B cell (primary cell): ENCODE measurements at regions of chr21 and their contacts with region 1.

Region 1: GRCh38 chr21:43866260-43866629 is 1.2 kb downstream of the AGPAT3 start:
- DNase-seq: peak; percentile 51
- ATAC-seq: peak; percentile 16
- H3K4me3 ChIP-seq: peak overlapping the region; percentile 32 to 78 (median 65)
- H3K4me3 Mint-ChIP-seq: peak overlapping the region; percentile 78
- H3K27ac ChIP-seq: peak overlapping the region; percentile 11 to 64
- H3K27ac Mint-ChIP-seq: peak overlapping the region; percentile 72
- H3K4me1 ChIP-seq: peaks cover 13 to 33% of the 10 kb centered on the region in 2 donors
- H3K4me1 Mint-ChIP-seq: peaks cover 41% of the 10 kb centered on the region
- H3K27me3 ChIP-seq: no peaks in the 10 kb centered on the region
- H3K27me3 Mint-ChIP-seq: no peaks in the 10 kb centered on the region
- CTCF ChIP-seq: no peak

Region 2: GRCh38 chr21:43805275-43805800 is 60.9 kb before region 1 on chr21:
- CTCF ChIA-PET with region 1: no interaction called
- POLR2A ChIA-PET with region 1: no interaction called
- intact Hi-C with region 1: loop called (anchors 10 kb)
- DNase-seq: peak; percentile 95
- ATAC-seq: peak; percentile 98
- H3K4me3 ChIP-seq: peak overlapping the region in 1 of 5 experiments; percentile 16
- H3K4me3 Mint-ChIP-seq: peak overlapping the region; percentile 77
- H3K27ac ChIP-seq: peak overlapping the region; percentile 6 to 78
- H3K27ac Mint-ChIP-seq: peak overlapping the region; percentile 84
- H3K4me1 ChIP-seq: peaks cover 26 to 42% of the 10 kb centered on the region in 2 donors
- H3K4me1 Mint-ChIP-seq: peaks cover 22% of the 10 kb centered on the region
- H3K27me3 ChIP-seq: peaks cover 0 to 11% (median 2%) of the 10 kb centered on the region in 4 experiments
- H3K27me3 Mint-ChIP-seq: no peaks in the 10 kb centered on the region
- CTCF ChIP-seq: no peak

Region 3: GRCh38 chr21:43916691-43917514 is 50.7 kb after region 1 on chr21:
- CTCF ChIA-PET with region 1: no interaction called
- POLR2A ChIA-PET with region 1: no interaction called
- intact Hi-C with region 1: loop called (anchors 10 kb)
- DNase-seq: peak; percentile 68
- ATAC-seq: peak; percentile 71
- H3K4me3 ChIP-seq: peak overlapping the region; percentile 24 to 65 (median 60)
- H3K4me3 Mint-ChIP-seq: peak overlapping the region; percentile 79
- H3K27ac ChIP-seq: peak overlapping the region; percentile 59 to 67
- H3K27ac Mint-ChIP-seq: peak overlapping the region; percentile 80
- H3K4me1 ChIP-seq: peaks cover 15 to 35% of the 10 kb centered on the region in 2 donors
- H3K4me1 Mint-ChIP-seq: peaks cover 55% of the 10 kb centered on the region
- H3K27me3 ChIP-seq: no peaks in the 10 kb centered on the region
- H3K27me3 Mint-ChIP-seq: no peaks in the 10 kb centered on the region
- CTCF ChIP-seq: no peak